BJ (cell line): ENCODE measurements at regions of chr6 and their contacts with region 1.

Region 1: GRCh38 chr6:32716399-32716798 is 24.8 kb upstream of the HLA-DQA2 start:
- DNase-seq: no peak
- H3K4me3 ChIP-seq: no peak overlapping the region
- H3K27me3 ChIP-seq: no peaks in the 10 kb centered on the region; the same call in 1 of the 2 replicates
- CTCF ChIP-seq: no peak

Region 2: DNA sequence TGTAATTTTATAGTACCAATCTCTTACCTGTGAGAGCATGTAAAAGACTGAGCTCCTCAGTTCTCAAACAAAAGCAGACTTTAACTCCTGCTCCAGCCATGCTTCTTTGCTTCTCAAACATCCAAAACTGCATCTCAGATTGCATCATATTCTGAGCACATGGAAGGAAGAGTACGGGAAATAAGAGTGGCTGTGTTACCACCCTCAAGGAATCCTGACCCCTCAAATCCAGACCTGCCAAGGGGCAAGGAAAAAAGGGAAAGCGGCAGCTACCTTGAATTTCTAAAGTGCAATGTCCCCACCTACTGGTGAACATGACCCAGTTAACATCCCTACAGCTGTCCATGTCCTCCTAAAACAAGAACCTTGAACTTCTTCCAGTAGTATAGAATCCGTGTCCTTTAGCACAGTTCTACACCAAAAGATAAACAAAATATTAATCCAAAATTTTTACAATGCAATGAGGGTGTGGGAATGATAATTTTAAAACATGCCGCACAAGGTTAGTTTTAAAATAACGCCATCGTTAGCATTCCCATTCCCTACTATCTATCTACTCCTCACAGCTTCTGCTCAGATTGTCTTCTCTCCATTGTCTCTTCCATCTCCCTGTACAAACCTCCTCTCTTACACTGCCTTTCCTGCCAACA is 15.9 kb before region 1 on chr6:
- CTCF ChIA-PET with region 1: interaction called, 12 read pairs
- POLR2A ChIA-PET with region 1: no interaction called
- DNase-seq: no peak
- H3K4me3 ChIP-seq: no peak overlapping the region
- H3K27me3 ChIP-seq: no peaks in the 10 kb centered on the region
- CTCF ChIP-seq: peak; percentile 73

Region 3: GRCh38 chr6:32857156-32857891 is 140.9 kb after region 1 on chr6:
- CTCF ChIA-PET with region 1: no interaction called
- POLR2A ChIA-PET with region 1: no interaction called
- DNase-seq: no peak
- H3K4me3 ChIP-seq: no peak overlapping the region
- H3K27me3 ChIP-seq: no peaks in the 10 kb centered on the region
- CTCF ChIP-seq: no peak